MCF 10A (cell line): ENCODE measurements at regions of chr5 and their contacts with region 1.

Region 1: DNA sequence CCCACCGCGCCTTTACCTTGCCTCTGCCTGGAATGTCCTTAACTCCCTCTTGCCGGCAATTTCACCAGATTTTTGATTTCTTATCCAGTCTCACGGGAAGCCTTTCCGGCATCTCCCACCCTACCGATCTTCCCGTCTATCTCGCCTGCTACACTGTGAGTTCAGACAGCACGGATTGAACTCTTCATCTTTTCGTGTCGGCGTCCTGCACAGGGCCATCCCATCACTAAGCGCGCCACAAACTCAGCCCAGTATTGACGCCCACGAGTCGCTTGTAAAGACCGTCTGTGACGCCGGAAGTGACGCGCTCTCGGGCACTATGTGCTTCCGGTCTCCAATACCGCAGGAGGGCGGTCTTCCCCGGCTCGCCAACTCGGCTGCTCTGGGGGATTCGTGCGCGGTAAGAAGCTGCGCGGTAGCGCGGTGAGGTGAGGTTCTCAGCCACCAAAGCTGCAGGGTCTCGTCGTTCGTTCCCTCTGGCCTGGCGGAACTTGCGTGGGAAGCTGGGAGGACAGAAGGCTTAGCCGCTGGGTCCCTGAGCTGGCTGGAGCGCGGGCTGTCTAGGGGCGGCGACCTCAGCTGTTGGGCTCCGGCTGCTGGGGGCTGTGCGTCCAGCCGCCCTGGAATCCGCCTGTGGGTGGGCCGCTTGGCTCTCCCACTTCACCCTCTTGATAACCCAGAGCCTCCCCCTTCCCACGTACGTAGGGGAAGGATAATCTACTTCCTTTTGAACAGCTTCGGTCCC is at the start of gene ZCCHC9:
- DNase-seq: peak; percentile 93
- H3K4me3 Mint-ChIP-seq: peak within 1 kb of the TSS; percentile 87
- H3K27ac Mint-ChIP-seq: peak within 1 kb of the TSS; percentile 95
- H3K4me1 Mint-ChIP-seq: peaks cover 22% of the 10 kb centered on the region
- H3K27me3 Mint-ChIP-seq: no peaks in the 10 kb centered on the region
- CTCF ChIP-seq: no peak
- total RNA-seq, gene ZCCHC9: 31.5 and 33.8 TPM in 2 replicates

Region 2: GRCh38 chr5:81105261-81105877 is 196.1 kb before region 1 on chr5:
- CTCF ChIA-PET with region 1: interaction called, 5 read pairs
- POLR2A ChIA-PET with region 1: no interaction called
- intact Hi-C with region 1: loop called (anchors 1 kb)
- DNase-seq: no peak
- H3K4me3 Mint-ChIP-seq: no peak overlapping the region
- H3K27ac Mint-ChIP-seq: no peak overlapping the region
- H3K4me1 Mint-ChIP-seq: no peaks in the 10 kb centered on the region
- H3K27me3 Mint-ChIP-seq: peaks cover 47% of the 10 kb centered on the region
- CTCF ChIP-seq: no peak

Region 3: GRCh38 chr5:81207009-81207408 is 94.4 kb before region 1 on chr5:
- CTCF ChIA-PET with region 1: interaction called, 11 read pairs
- POLR2A ChIA-PET with region 1: no interaction called
- intact Hi-C with region 1: no loop called
- DNase-seq: peak; percentile 8
- H3K4me3 Mint-ChIP-seq: no peak overlapping the region
- H3K27ac Mint-ChIP-seq: no peak overlapping the region
- H3K4me1 Mint-ChIP-seq: no peaks in the 10 kb centered on the region
- H3K27me3 Mint-ChIP-seq: no peaks in the 10 kb centered on the region
- CTCF ChIP-seq: peak; percentile 8

Region 4: GRCh38 chr5:81288021-81288433 is 13.4 kb before region 1 on chr5:
- CTCF ChIA-PET with region 1: interaction called, 26 read pairs
- POLR2A ChIA-PET with region 1: interaction called, 7 read pairs
- intact Hi-C with region 1: no loop called
- DNase-seq: no peak
- H3K4me3 Mint-ChIP-seq: no peak overlapping the region
- H3K27ac Mint-ChIP-seq: no peak overlapping the region
- H3K4me1 Mint-ChIP-seq: peaks cover 8% of the 10 kb centered on the region
- H3K27me3 Mint-ChIP-seq: no peaks in the 10 kb centered on the region
- CTCF ChIP-seq: no peak